Psoas muscle (tissue), 8 donors: ENCODE measurements at regions of chr4 and their contacts with region 1.

Region 1: GRCh38 chr4:144223661-144224060 is 83.1 kb upstream of the GYPA start:
- DNase-seq: no peak
- ATAC-seq: no peak
- H3K4me3 ChIP-seq: no peak overlapping the region
- H3K27ac ChIP-seq: no peak overlapping the region
- H3K4me1 ChIP-seq: no peaks in the 10 kb centered on the region
- H3K27me3 ChIP-seq: no peaks in the 10 kb centered on the region
- CTCF ChIP-seq: no peak

Region 2: DNA sequence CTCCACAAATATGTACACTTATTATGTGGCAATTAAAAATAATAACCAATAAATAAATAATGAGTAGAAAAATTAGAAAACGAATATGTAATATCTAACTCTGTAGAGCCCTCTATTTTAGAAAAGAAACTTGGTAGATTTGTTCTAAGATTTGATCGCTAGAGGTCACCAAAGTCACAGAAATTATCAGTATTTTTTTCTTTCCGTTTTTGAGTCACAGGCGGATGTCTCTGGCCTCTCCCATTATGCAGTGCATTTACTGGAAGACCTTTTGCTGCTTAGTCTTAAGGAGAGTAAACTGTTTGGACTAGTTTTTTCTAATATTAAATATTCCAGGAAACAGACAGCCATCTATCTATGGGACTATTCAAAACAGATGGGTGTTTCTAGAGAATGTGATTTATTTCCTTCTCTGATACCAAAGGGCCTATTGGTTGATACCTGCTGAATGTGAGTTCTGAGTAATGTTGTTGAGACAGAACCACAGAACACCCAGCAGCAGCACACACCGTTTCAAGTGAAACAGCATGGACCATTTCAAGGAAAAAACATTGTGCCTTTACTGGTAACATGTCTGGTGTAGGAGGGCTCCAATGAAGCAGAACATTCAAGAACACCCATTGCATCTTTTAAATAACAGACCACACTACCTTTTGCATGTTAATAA is 49.1 kb before region 1 on chr4:
- intact Hi-C with region 1: no loop called
- DNase-seq: no peak
- ATAC-seq: peak in 3 of 4 donors; percentile 53 to 74 (median 65)
- H3K4me3 ChIP-seq: no peak overlapping the region
- H3K27ac ChIP-seq: no peak overlapping the region
- H3K4me1 ChIP-seq: no peaks in the 10 kb centered on the region
- H3K27me3 ChIP-seq: no peaks in the 10 kb centered on the region
- CTCF ChIP-seq: peak; percentile 40

Region 3: DNA sequence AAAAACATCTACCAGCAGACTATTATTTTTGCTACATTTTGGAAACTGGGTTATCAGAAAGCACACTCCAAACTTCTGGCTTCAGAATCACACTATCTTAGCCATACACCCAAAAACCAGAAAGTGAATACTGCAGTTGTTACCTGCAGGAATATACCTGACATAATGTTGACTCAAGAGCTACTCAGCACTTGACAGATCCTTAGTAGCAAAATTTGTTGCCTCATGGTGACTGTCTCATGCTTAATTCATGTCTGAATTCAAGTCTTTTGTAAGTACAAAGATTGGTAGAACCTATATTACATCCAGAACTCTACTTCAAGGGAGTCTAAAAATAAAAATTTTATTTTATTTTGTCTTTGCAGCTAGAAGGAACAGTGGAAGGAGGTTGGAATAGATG is 57.0 kb after region 1 on chr4:
- intact Hi-C with region 1: loop called in 1 of 2 experiments (anchors 2 kb)
- DNase-seq: no peak
- ATAC-seq: no peak
- H3K4me3 ChIP-seq: no peak overlapping the region
- H3K27ac ChIP-seq: no peak overlapping the region
- H3K4me1 ChIP-seq: no peaks in the 10 kb centered on the region
- H3K27me3 ChIP-seq: no peaks in the 10 kb centered on the region
- CTCF ChIP-seq: no peak

Region 4: GRCh38 chr4:144300616-144301015 is 77.0 kb after region 1 on chr4:
- intact Hi-C with region 1: no loop called
- DNase-seq: no peak
- ATAC-seq: no peak
- H3K4me3 ChIP-seq: no peak overlapping the region
- H3K27ac ChIP-seq: no peak overlapping the region
- H3K4me1 ChIP-seq: no peaks in the 10 kb centered on the region
- H3K27me3 ChIP-seq: no peaks in the 10 kb centered on the region
- CTCF ChIP-seq: no peak